Endothelial cell of umbilical vein (primary cell): ENCODE measurements at regions of chr4 and their contacts with region 1.

Region 1: GRCh38 chr4:170047771-170048354 is 21.7 kb upstream of the MFAP3L start:
- DNase-seq: peak; percentile 65
- H3K4me3 ChIP-seq: no peak overlapping the region
- H3K27ac ChIP-seq: no peak overlapping the region
- H3K4me1 ChIP-seq: no peaks in the 10 kb centered on the region
- H3K27me3 ChIP-seq: peaks cover 0 to 1% of the 10 kb centered on the region in 2 experiments
- CTCF ChIP-seq: peak; percentile 51 to 59
- POLR2A ChIP-seq: no peak

Region 2: GRCh38 chr4:169791527-169792156 is 256.2 kb before region 1 on chr4:
- CTCF ChIA-PET with region 1: interaction called, 14 read pairs
- POLR2A ChIA-PET with region 1: no interaction called
- dilution Hi-C with region 1: no loop called
- intact Hi-C with region 1: no loop called
- DNase-seq: peak; percentile 64
- H3K4me3 ChIP-seq: no peak overlapping the region
- H3K27ac ChIP-seq: no peak overlapping the region
- H3K4me1 ChIP-seq: no peaks in the 10 kb centered on the region
- H3K27me3 ChIP-seq: peaks cover 4 to 6% of the 10 kb centered on the region in 2 experiments
- CTCF ChIP-seq: peak; percentile 40 to 41
- POLR2A ChIP-seq: no peak

Region 3: GRCh38 chr4:170057866-170058265 is 10.0 kb after region 1 on chr4:
- CTCF ChIA-PET with region 1: interaction called, 14 read pairs
- POLR2A ChIA-PET with region 1: no interaction called
- dilution Hi-C with region 1: no loop called
- intact Hi-C with region 1: no loop called
- DNase-seq: no peak
- H3K4me3 ChIP-seq: no peak overlapping the region
- H3K27ac ChIP-seq: no peak overlapping the region
- H3K4me1 ChIP-seq: no peaks in the 10 kb centered on the region
- H3K27me3 ChIP-seq: no peaks in the 10 kb centered on the region
- CTCF ChIP-seq: no peak
- POLR2A ChIP-seq: no peak